ENCODE measurements at regions of chr6 and their contacts with region 1.

Region 1: GRCh38 chr6:4301871-4302270 is 166.5 kb upstream of the ECI2 start:
- DNase-seq: no peak

Region 2: GRCh38 chr6:4936681-4937041 is 634.8 kb after region 1 on chr6:
- intact Hi-C with region 1: loop called in 1 of 2 experiments (anchors 10 kb)
- DNase-seq: no peak